IMR-90 (cell line): ENCODE measurements at regions of chr15 and their contacts with region 1.

Region 1: DNA sequence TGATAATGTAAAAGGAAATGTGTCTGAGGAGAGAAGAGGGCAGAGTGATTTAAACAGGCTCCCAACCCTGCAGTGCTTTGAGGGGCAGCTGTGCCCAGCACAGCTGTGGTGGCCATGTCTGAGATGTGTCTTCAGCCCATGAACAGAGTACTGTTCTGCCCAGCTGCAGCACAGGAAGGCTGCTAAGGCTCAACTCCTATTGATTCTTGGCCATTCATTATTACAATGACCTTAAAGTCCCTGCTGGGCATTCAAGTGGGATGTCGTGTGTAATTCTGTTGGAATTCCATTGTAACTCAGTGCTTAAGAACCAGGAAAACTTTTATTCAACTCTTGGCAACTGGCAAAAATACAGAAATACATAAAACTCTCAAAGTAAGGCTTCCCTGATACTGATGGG is 229.3 kb downstream of the MCTP2 start:
- DNase-seq: no peak
- ATAC-seq: no peak
- H3K4me3 ChIP-seq: no peak overlapping the region
- H3K27ac ChIP-seq: no peak overlapping the region
- H3K4me1 ChIP-seq: no peaks in the 10 kb centered on the region
- H3K27me3 ChIP-seq: no peaks in the 10 kb centered on the region
- CTCF ChIP-seq: no peak
- POLR2A ChIP-seq: no peak
- RAD21 ChIP-seq: no peak

Region 2: DNA sequence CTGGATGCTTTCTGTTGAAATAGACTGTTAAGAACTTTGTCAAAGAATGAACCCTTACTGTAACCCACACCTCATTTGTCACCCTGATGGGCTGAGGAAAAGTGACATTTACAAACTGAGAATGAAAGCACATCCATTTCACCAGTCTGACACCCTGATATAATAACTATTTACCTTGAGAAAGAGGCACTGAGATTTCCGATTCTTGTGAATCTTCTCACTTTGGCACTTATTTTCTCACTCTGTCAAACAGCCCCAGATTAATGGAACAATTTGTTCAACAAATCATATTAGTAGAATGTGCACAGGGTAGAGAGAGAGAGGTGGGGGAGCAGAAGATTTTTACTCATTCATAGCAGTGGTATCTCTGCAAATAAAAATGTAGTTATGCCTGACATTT is 377.7 kb after region 1 on chr15:
- CTCF ChIA-PET with region 1: no interaction called
- POLR2A ChIA-PET with region 1: no interaction called
- dilution Hi-C with region 1: no loop called
- in situ Hi-C with region 1: no loop called
- intact Hi-C with region 1: loop called (anchors 5 kb)
- DNase-seq: no peak
- ATAC-seq: no peak
- H3K4me3 ChIP-seq: no peak overlapping the region
- H3K27ac ChIP-seq: no peak overlapping the region
- H3K4me1 ChIP-seq: no peaks in the 10 kb centered on the region
- H3K27me3 ChIP-seq: no peaks in the 10 kb centered on the region
- CTCF ChIP-seq: no peak
- POLR2A ChIP-seq: no peak
- RAD21 ChIP-seq: no peak